Activated CD8-positive, alpha-beta T cell treated with anti-CD3 and anti-CD28 coated beads, Interleukin-2, amount 10 ng/mL, durations not matched to agents 7 days and 5 days (primary cell): ENCODE measurements at regions of chr17 and their contacts with region 1.

Region 1: DNA sequence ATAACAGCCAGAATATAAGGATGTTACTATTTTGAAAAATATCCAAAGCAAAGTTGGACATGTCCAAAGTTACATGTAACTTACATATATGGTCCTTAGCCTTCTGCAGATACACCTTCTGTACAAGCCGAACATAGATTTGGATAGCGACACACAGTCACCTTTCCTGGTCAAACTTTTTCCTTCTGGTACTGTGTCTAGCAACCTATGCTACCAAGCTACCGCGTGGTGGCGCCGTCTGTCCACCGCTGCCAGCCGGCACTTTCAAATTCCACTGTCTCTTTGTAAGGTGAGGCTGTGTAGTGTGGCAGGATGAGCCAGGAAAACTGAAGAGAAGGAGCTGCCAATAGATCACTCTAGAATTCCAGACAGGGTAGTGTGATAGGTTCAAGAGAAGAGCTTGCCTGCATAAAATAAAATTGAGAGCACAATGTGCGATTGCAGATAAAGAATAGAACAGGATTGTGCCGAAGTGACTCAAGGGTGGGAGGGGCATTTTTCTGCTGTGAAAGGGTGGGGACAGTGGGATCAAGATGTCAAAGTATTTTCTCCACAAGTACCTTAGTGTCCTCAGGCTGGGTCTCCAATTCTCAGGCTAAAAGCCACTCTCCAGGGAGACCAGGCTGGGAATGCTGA is 366.9 kb downstream of the SLC39A11 start:
- DNase-seq: peak; percentile 66
- ATAC-seq: peak; percentile 42
- H3K4me3 Mint-ChIP-seq: no peak overlapping the region
- H3K27ac Mint-ChIP-seq: peak overlapping the region; percentile 80
- H3K4me1 Mint-ChIP-seq: peaks cover 61% of the 10 kb centered on the region
- H3K27me3 Mint-ChIP-seq: no peaks in the 10 kb centered on the region

Region 2: DNA sequence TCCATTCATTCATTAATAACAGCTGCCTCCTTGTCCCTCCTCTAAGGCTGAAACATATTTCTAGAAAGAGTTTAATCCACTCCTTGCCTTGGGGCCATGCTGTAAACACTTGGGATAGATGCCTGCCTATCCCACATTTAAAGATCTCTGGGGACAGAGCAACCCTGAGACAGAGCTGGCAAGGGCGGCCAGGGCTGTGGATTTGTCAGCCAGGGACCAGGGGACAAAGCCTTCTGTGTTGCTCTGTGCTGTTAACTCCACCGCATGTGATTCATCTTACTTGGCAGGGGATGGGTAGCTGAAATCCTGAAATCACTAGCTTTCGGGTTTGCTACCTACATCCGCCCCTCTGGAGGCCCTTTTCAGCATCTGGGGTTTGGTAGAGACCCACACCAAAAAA is 26.0 kb before region 1 on chr17:
- CTCF ChIA-PET with region 1: interaction called, 33 read pairs
- POLR2A ChIA-PET with region 1: no interaction called
- DNase-seq: no peak
- ATAC-seq: no peak
- H3K4me3 Mint-ChIP-seq: no peak overlapping the region
- H3K27ac Mint-ChIP-seq: no peak overlapping the region
- H3K4me1 Mint-ChIP-seq: peaks cover 5% of the 10 kb centered on the region
- H3K27me3 Mint-ChIP-seq: no peaks in the 10 kb centered on the region

Region 3: DNA sequence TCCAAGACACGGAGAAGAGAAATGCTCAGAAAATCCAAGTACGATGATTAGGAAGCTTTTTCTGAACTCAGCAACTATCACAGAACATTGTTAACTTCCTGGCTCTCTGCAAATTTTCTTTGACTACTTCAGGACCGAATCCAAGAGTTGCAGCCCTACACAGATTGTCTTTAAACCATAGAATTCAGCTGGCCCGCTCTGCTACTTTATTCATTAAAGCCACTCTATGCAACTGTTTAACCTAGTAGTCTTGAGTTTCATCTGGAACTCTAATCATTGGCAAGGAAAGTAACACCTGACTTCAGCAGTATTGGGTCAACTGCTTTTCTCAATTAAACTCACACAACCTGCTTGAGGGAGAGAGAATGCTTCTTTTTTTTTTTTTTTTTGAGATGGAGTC is 156.9 kb after region 1 on chr17:
- CTCF ChIA-PET with region 1: no interaction called
- POLR2A ChIA-PET with region 1: no interaction called
- DNase-seq: no peak
- ATAC-seq: no peak
- H3K4me3 Mint-ChIP-seq: no peak overlapping the region
- H3K27ac Mint-ChIP-seq: no peak overlapping the region
- H3K4me1 Mint-ChIP-seq: no peaks in the 10 kb centered on the region
- H3K27me3 Mint-ChIP-seq: no peaks in the 10 kb centered on the region

Region 4: DNA sequence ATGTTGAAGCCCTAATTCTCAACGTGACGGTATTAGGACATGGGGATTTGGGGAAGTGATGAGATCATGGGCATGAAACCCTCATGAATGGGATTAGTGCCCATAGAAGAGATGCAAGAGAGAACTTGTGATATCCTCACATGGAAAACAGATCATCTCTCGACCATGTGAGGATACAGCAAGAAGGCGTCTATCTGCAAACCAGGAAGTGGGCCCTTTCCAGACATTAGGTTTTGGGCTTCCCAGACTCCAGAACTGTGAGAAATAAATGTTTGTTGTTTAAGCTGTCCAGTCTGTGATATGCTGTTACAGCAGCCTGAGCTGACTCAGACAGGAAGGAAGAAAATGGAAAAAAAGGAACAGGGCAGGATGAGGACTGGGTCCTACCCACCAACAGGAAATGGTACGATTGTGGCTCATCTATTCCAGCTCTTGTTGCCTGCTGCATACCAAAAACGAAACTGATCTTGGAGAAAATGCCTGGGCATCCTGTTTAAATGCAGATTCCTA is 417.4 kb after region 1 on chr17:
- CTCF ChIA-PET with region 1: interaction called, 12 read pairs
- POLR2A ChIA-PET with region 1: no interaction called
- DNase-seq: peak; percentile 42
- ATAC-seq: peak; percentile 42
- H3K4me3 Mint-ChIP-seq: no peak overlapping the region
- H3K27ac Mint-ChIP-seq: peak overlapping the region; percentile 26
- H3K4me1 Mint-ChIP-seq: peaks cover 20% of the 10 kb centered on the region
- H3K27me3 Mint-ChIP-seq: peaks cover 6% of the 10 kb centered on the region

Region 5: GRCh38 chr17:73192894-73193701 is 467.5 kb after region 1 on chr17 and contains the start of gene COG1:
- CTCF ChIA-PET with region 1: interaction called, 77 read pairs
- POLR2A ChIA-PET with region 1: interaction called, 6 read pairs
- DNase-seq: peak; percentile 90
- ATAC-seq: peak; percentile 84
- H3K4me3 Mint-ChIP-seq: peak within 1 kb of the TSS; percentile 95
- H3K27ac Mint-ChIP-seq: peak within 1 kb of the TSS; percentile 97
- H3K4me1 Mint-ChIP-seq: peaks cover 34% of the 10 kb centered on the region
- H3K27me3 Mint-ChIP-seq: no peaks in the 10 kb centered on the region
- total RNA-seq, gene COG1: 25.2 to 30.5 TPM

Region 6: DNA sequence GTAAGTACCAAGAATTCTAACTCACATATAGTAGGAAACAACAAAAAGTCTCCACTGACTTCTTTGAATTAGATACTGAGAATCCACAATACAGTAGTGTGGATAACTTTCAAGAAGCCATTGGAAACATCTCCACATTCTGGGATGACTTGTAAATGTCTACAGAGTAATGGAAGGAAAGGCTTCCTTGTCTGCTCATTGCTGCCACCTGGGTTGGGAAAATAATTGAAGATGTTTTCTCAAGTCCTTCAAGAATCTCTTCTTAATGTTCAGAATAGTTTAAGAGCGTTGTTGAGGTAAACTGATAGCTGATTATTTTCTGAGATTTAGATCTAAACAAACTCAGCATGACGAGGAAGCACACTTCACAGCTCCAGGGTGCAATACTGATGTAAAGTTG is 522.2 kb after region 1 on chr17:
- CTCF ChIA-PET with region 1: interaction called, 23 read pairs
- POLR2A ChIA-PET with region 1: no interaction called
- DNase-seq: no peak
- ATAC-seq: no peak
- H3K4me3 Mint-ChIP-seq: no peak overlapping the region
- H3K27ac Mint-ChIP-seq: no peak overlapping the region
- H3K4me1 Mint-ChIP-seq: no peaks in the 10 kb centered on the region
- H3K27me3 Mint-ChIP-seq: no peaks in the 10 kb centered on the region